ENCODE measurements at regions of chr1 and their contacts with region 1.

Region 1: GRCh38 chr1:11838349-11839272 is 9.0 kb downstream of the NPPA start:
- DNase-seq: peak; percentile 33 to 91
- H3K4me3 ChIP-seq: no peak overlapping the region
- H3K27ac ChIP-seq: no peak overlapping the region
- H3K4me1 ChIP-seq: no peaks in the 10 kb centered on the region
- H3K27me3 ChIP-seq: no peaks in the 10 kb centered on the region
- CTCF ChIP-seq: peak; percentile 96 to 100 (median 99)
- EP300 ChIP-seq: no peak
- POLR2A ChIP-seq: no peak
- RAD21 ChIP-seq: peak; percentile 98

Region 2: DNA sequence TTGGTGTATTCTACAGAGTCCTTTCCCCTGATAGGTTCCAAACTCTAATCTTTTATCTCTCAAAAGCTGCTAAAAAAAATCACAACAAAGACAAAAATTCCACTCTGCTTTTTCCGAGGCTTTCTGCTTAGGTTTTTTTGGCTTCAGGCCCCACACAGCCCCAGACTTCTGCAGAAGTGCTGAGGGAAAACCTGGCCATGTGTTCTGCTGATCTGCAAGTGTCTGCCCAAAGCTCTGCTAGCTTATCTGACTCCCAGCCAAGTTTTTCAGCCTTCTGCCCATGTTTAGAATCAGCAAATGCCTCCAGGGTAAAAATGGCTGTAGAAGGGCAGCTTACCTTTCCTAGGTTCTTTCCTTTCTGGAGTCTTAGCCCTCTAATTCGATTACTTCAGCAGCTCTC is 331.3 kb before region 1 on chr1:
- CTCF ChIA-PET with region 1: no interaction called
- POLR2A ChIA-PET with region 1: no interaction called
- DNase-seq: no peak
- H3K4me3 ChIP-seq: no peak overlapping the region
- H3K27ac ChIP-seq: no peak overlapping the region
- H3K4me1 ChIP-seq: no peaks in the 10 kb centered on the region
- H3K27me3 ChIP-seq: no peaks in the 10 kb centered on the region
- CTCF ChIP-seq: no peak
- EP300 ChIP-seq: no peak
- POLR2A ChIP-seq: no peak
- RAD21 ChIP-seq: no peak

Region 3: DNA sequence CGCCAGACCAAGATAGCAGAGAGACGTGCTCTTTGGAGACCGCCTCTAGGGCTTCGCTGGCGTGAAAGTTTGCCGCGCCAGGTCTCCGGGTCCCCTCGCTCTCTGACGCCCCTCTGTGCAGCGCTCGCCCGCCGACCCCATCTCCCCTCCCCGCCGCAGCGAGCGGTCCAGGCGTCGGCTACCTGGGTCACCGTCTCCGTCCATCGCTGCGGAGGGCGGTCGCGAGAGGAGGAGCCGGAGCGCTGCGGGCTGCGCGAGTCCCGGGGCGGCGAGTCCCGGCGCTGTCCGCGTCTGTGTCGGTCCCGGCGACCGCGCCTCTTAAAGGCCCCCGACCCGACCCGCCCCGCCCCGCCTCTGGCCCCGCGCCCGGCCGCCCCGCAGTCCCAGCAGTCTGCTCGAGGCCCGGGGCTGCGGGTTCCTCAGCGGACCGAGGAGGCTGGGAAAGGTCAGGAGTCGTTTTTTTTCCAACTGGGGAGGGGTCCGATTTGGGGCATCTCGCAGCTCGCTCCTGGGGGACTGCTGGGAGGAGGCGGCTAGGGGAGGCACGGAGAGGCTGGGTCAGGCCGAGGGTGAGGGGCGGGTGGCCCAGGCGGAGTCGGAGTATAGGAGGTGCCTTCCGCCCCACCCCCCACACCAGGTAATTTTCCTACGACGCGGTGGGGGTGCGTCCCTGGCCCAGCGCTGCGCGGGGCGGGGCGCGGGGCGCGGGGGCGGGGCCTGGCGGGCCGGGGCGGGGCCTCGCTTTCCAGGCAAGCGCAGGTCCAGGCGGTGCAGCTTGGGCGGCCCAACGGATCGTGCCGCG is 184.3 kb before region 1 on chr1 and contains the starts of genes FBXO2 and FBXO44:
- CTCF ChIA-PET with region 1: no interaction called
- POLR2A ChIA-PET with region 1: no interaction called
- DNase-seq: peak in 1 of 2 experiments; percentile 90
- H3K4me3 ChIP-seq: peak within 1 kb of the TSS; percentile 56 to 78 (median 72)
- H3K27ac ChIP-seq: no peak within 1 kb of the TSS
- H3K4me1 ChIP-seq: peaks cover 6 to 35% (median 28%) of the 10 kb centered on the region in 4 experiments
- H3K27me3 ChIP-seq: peaks cover 0 to 4% (median 2%) of the 10 kb centered on the region in 4 experiments; a peak in 2 of 7 replicates
- CTCF ChIP-seq: no peak
- EP300 ChIP-seq: no peak
- POLR2A ChIP-seq: no peak
- RAD21 ChIP-seq: no peak
- total RNA-seq, gene FBXO2: 51.3 and 55.5 TPM in 2 replicates
- total RNA-seq, gene FBXO44: 27.2 and 29.2 TPM in 2 replicates

Region 4: GRCh38 chr1:11882814-11883538 is 44.4 kb after region 1 on chr1:
- CTCF ChIA-PET with region 1: interaction called, 35 read pairs
- POLR2A ChIA-PET with region 1: no interaction called
- DNase-seq: no peak
- H3K4me3 ChIP-seq: no peak overlapping the region
- H3K27ac ChIP-seq: no peak overlapping the region
- H3K4me1 ChIP-seq: peaks cover 0 to 10% (median 8%) of the 10 kb centered on the region in 4 experiments; a peak in 6 of 7 replicates
- H3K27me3 ChIP-seq: no peaks in the 10 kb centered on the region
- CTCF ChIP-seq: no peak
- EP300 ChIP-seq: no peak
- POLR2A ChIP-seq: no peak
- RAD21 ChIP-seq: no peak

Measured in H1 (cell line).